Tibial artery (tissue), 4 donors: ENCODE measurements at regions of chr12 and their contacts with region 1.

Region 1: GRCh38 chr12:5442251-5443006 is 10.5 kb downstream of the NTF3 start:
- DNase-seq: no peak
- H3K4me3 ChIP-seq: no peak overlapping the region
- H3K27ac ChIP-seq: no peak overlapping the region
- H3K4me1 ChIP-seq: peaks cover 0 to 83% (median 28%) of the 10 kb centered on the region in 4 donors
- H3K27me3 ChIP-seq: no peaks in the 10 kb centered on the region
- CTCF ChIP-seq: peak; percentile 60 to 64

Region 2: GRCh38 chr12:5022465-5023061 is 419.9 kb before region 1 on chr12:
- intact Hi-C with region 1: loop called (anchors 10 kb)
- DNase-seq: peak in 1 of 2 donors; percentile 71
- H3K4me3 ChIP-seq: no peak overlapping the region
- H3K27ac ChIP-seq: no peak overlapping the region
- H3K4me1 ChIP-seq: peaks cover 0 to 6% (median 3%) of the 10 kb centered on the region in 4 donors
- H3K27me3 ChIP-seq: no peaks in the 10 kb centered on the region
- CTCF ChIP-seq: peak; percentile 91 to 95

Region 3: GRCh38 chr12:5171701-5172100 is 270.7 kb before region 1 on chr12:
- intact Hi-C with region 1: loop called (anchors 5 kb)
- DNase-seq: no peak
- H3K4me3 ChIP-seq: no peak overlapping the region
- H3K27ac ChIP-seq: peak overlapping the region in 1 of 2 donors; percentile 55
- H3K4me1 ChIP-seq: peaks cover 0 to 42% (median 22%) of the 10 kb centered on the region in 4 donors
- H3K27me3 ChIP-seq: no peaks in the 10 kb centered on the region
- CTCF ChIP-seq: peak; percentile 48 to 53

Region 4: GRCh38 chr12:5499566-5500330 is 57.3 kb after region 1 on chr12:
- intact Hi-C with region 1: loop called (anchors 5 kb)
- DNase-seq: no peak
- H3K4me3 ChIP-seq: no peak overlapping the region
- H3K27ac ChIP-seq: no peak overlapping the region
- H3K4me1 ChIP-seq: peaks cover 0 to 45% (median 9%) of the 10 kb centered on the region in 4 donors
- H3K27me3 ChIP-seq: no peaks in the 10 kb centered on the region
- CTCF ChIP-seq: no peak